Activated CD4-positive, alpha-beta memory T cell treated with anti-CD3 and anti-CD28 coated beads for 36 hours (primary cell): ENCODE measurements at regions of chr14 and their contacts with region 1.

Region 1: DNA sequence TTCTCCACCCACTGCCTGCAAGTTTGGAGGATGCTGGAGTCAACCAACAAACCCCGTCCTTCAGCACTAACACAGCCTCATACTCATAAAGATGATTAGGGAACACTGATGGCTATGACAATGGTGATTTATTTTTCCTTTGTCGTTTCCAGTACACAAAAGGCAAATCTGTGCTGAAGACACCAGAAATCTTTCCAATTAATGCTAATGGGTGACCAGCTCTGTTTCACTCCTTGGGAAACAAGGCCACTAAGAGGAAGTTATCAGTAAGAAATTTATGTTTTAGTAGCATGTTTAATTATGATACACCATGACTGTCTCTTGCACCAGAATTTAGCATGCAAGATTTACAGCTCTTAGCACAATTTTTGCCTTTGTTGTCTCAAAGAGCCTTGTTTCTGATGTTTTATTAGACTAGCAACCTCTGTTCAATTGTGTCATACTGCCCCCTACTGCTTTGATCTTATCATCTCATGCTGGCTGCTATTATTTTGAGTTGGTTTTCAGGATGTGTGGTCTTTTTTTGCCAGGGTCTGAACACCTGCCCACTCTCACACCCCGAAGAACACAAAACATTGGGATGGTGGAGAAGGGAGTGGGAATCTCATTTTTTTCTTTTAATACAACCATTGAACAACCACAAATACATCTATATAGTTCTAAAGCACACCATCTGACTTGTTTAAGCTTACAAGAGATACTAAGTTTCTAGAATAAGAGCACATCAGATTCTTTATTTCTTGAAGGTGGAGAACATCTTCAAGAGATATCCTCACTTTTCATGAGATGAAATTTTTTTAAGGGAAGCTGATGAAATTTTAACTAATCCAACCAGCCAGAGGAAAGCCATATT is 160.9 kb downstream of the SPTSSA start:
- DNase-seq: no peak
- H3K4me3 Mint-ChIP-seq: no peak overlapping the region
- H3K27ac Mint-ChIP-seq: no peak overlapping the region
- H3K4me1 Mint-ChIP-seq: no peaks in the 10 kb centered on the region
- H3K27me3 Mint-ChIP-seq: peaks cover 7% of the 10 kb centered on the region

Region 2: DNA sequence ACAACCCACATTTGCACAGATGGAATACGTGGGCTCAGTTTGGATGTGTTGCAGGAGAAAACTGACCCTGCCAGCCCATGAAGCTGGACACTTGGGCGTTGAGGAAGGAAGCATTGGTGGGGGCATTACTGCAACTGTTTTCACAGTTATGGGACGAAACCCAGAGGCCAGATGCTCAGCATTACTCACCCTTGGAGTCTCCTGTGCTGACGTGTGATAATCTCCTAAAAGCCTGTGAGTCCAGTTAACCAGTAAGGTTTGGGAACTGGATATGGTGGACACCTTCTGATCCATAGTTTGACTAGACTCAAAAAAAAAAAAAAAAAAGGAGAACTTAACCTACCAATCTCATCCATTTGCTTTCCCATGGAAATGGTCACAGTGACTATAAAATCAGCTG is 297.4 kb before region 1 on chr14:
- CTCF ChIA-PET with region 1: no interaction called
- POLR2A ChIA-PET with region 1: no interaction called
- intact Hi-C with region 1: no loop called
- DNase-seq: no peak
- H3K4me3 Mint-ChIP-seq: no peak overlapping the region
- H3K27ac Mint-ChIP-seq: no peak overlapping the region
- H3K4me1 Mint-ChIP-seq: no peaks in the 10 kb centered on the region
- H3K27me3 Mint-ChIP-seq: no peaks in the 10 kb centered on the region

Region 3: GRCh38 chr14:34275078-34275477 is 26.0 kb before region 1 on chr14:
- CTCF ChIA-PET with region 1: no interaction called
- POLR2A ChIA-PET with region 1: no interaction called
- intact Hi-C with region 1: no loop called
- DNase-seq: no peak
- H3K4me3 Mint-ChIP-seq: no peak overlapping the region
- H3K27ac Mint-ChIP-seq: no peak overlapping the region
- H3K4me1 Mint-ChIP-seq: no peaks in the 10 kb centered on the region
- H3K27me3 Mint-ChIP-seq: peaks cover 5% of the 10 kb centered on the region

Region 4: GRCh38 chr14:34322940-34323418 is 21.9 kb after region 1 on chr14:
- CTCF ChIA-PET with region 1: interaction called, 32 read pairs
- POLR2A ChIA-PET with region 1: no interaction called
- intact Hi-C with region 1: no loop called
- DNase-seq: peak; percentile 80
- H3K4me3 Mint-ChIP-seq: no peak overlapping the region
- H3K27ac Mint-ChIP-seq: no peak overlapping the region
- H3K4me1 Mint-ChIP-seq: no peaks in the 10 kb centered on the region
- H3K27me3 Mint-ChIP-seq: peaks cover 1% of the 10 kb centered on the region